Posterior vena cava (tissue), 2 donors: ENCODE measurements at regions of chr17 and their contacts with region 1.

Region 1: GRCh38 chr17:17041571-17042380 is 481 bp upstream of the MPRIP start:
- DNase-seq: peak; percentile 99

Region 2: DNA sequence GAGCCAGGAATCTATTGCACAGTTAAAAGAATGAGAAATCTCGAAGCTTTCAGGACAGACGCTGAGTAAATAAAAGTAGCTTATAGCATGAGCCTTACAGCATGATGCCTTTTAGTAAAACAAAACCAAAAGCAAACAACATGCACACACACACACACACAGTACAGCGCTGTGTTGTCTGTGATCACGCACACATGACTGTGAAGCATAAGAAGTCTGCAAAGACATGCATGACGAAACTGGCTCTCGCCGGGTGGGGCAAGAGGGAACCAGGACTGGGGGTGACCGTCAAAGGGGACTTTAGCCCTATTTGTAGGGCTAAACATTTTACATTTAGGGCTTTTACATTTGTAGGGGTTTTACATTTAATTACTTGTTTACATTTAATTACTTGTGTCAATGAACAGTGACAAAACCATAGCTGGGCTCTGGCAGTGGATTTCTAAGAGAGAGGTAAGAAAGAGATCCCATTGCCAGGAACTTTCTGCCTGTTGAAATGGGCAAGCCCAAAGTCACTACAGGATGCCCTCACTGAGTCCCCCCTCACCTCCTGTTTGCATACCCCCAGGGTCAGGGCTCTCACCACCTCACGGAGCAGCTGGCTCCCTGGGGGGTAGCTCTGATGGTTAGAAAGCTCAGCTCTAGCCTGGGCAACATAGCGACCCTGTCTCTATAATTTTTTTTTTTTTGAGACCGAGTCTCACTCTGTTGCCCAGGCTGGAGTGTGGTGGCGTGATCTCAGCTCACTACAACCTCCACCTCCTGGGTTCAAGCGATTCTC is 67.8 kb before region 1 on chr17:
- intact Hi-C with region 1: no loop called
- DNase-seq: no peak

Region 3: GRCh38 chr17:17075038-17075781 is 33.4 kb after region 1 on chr17:
- intact Hi-C with region 1: loop called in 1 of 2 experiments (anchors 5 kb)
- DNase-seq: peak; percentile 87

Region 4: GRCh38 chr17:17090642-17091103 is 48.9 kb after region 1 on chr17:
- intact Hi-C with region 1: loop called in 1 of 2 experiments (anchors 1 kb)
- DNase-seq: peak; percentile 38